Endothelial cell of umbilical vein (primary cell): ENCODE measurements at regions of chr7 and their contacts with region 1.

Region 1: DNA sequence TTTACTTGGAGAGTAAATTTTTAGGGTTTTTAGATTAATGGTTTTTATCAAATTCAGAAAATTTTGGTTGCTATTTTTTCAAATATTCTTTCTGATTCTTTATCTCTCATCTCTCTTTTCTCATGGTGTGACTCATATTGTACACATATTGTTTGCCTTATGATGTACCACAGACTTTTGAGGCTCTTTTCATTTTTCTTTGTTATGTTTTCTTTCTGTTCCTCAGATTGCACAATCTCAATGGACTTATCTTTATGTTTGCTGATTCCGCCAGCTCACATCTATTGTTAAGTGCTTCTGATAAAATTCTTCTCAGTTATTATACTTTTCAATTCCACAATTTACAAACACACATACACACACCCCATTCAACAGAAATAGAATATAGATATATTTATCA is 168.2 kb upstream of the IGFBP3 start:
- DNase-seq: no peak
- H3K4me3 ChIP-seq: no peak overlapping the region
- H3K27ac ChIP-seq: no peak overlapping the region
- H3K4me1 ChIP-seq: no peaks in the 10 kb centered on the region
- H3K27me3 ChIP-seq: no peaks in the 10 kb centered on the region
- CTCF ChIP-seq: no peak
- POLR2A ChIP-seq: no peak

Region 2: DNA sequence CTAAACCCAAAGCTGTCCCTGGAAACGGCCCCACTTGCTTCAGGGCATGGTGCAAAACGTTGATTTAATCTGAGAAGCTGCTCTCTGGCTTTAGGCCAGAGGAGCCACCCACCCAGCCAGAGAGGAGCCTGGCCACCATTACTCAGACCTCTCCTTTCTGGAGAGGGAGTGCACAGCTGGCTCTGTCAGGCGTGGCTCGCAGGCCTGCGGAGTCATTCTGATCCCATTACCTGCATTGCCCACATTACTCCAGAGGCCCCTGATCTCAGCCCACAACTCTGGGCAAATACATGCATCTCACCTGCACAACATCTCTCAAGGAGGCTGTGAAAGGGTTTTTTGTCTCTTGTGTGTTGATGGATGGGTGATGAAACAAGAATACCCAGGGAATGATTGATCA is 201.8 kb after region 1 on chr7:
- CTCF ChIA-PET with region 1: no interaction called
- POLR2A ChIA-PET with region 1: no interaction called
- dilution Hi-C with region 1: no loop called
- intact Hi-C with region 1: no loop called
- DNase-seq: no peak
- H3K4me3 ChIP-seq: no peak overlapping the region
- H3K27ac ChIP-seq: no peak overlapping the region
- H3K4me1 ChIP-seq: no peaks in the 10 kb centered on the region
- H3K27me3 ChIP-seq: peaks cover 0 to 2% of the 10 kb centered on the region in 2 experiments
- CTCF ChIP-seq: no peak
- POLR2A ChIP-seq: no peak

Region 3: GRCh38 chr7:46839651-46840050 is 750.4 kb after region 1 on chr7:
- CTCF ChIA-PET with region 1: no interaction called
- POLR2A ChIA-PET with region 1: interaction called, 16 read pairs
- dilution Hi-C with region 1: no loop called
- intact Hi-C with region 1: no loop called
- DNase-seq: peak; percentile 64
- H3K4me3 ChIP-seq: no peak overlapping the region
- H3K27ac ChIP-seq: no peak overlapping the region
- H3K4me1 ChIP-seq: peaks cover 4% of the 10 kb centered on the region
- H3K27me3 ChIP-seq: no peaks in the 10 kb centered on the region
- CTCF ChIP-seq: no peak
- POLR2A ChIP-seq: no peak